IMR-90 (cell line): ENCODE measurements at regions of chr12 and their contacts with region 1.

Region 1: DNA sequence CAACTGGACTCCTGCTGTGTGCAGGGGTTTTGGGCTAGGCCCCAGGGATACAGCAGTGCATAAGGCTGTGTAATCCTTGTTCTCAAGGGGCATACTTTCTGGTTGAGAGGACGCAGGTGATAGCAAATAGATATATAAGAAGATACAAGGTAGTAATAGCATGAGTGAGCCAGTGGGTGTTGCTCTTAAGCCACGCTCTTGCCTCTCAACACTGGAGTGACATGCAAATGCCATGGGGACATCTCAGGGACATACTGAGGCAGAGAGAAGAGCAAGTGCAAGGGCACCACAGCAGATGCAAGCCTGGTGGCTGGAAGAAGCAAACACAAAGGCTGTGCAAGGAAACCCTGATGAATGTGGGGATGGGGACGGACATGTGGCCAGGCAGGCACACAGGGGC is 223.3 kb downstream of the CHST11 start:
- DNase-seq: peak; percentile 22
- ATAC-seq: peak; percentile 63; the same call in 1 of the 2 replicates
- H3K4me3 ChIP-seq: no peak overlapping the region
- H3K27ac ChIP-seq: no peak overlapping the region
- H3K4me1 ChIP-seq: no peaks in the 10 kb centered on the region
- H3K27me3 ChIP-seq: no peaks in the 10 kb centered on the region; the same call in none of the 2 replicates
- CTCF ChIP-seq: peak; percentile 39
- POLR2A ChIP-seq: no peak
- RAD21 ChIP-seq: peak; percentile 56

Region 2: GRCh38 chr12:103924761-103925641 is 755.1 kb before region 1 on chr12:
- CTCF ChIA-PET with region 1: no interaction called
- POLR2A ChIA-PET with region 1: no interaction called
- dilution Hi-C with region 1: no loop called
- in situ Hi-C with region 1: no loop called
- intact Hi-C with region 1: no loop called
- DNase-seq: peak; percentile 88
- ATAC-seq: no peak
- H3K4me3 ChIP-seq: no peak overlapping the region
- H3K27ac ChIP-seq: no peak overlapping the region; the same call in 1 of the 2 replicates
- H3K4me1 ChIP-seq: peaks cover 4% of the 10 kb centered on the region
- H3K27me3 ChIP-seq: no peaks in the 10 kb centered on the region
- CTCF ChIP-seq: no peak
- POLR2A ChIP-seq: no peak
- RAD21 ChIP-seq: no peak

Region 3: GRCh38 chr12:104858611-104859543 is 178.8 kb after region 1 on chr12:
- CTCF ChIA-PET with region 1: no interaction called
- POLR2A ChIA-PET with region 1: no interaction called
- dilution Hi-C with region 1: no loop called
- in situ Hi-C with region 1: no loop called
- intact Hi-C with region 1: loop called (anchors 10 kb)
- DNase-seq: peak; percentile 61
- ATAC-seq: peak; percentile 27
- H3K4me3 ChIP-seq: no peak overlapping the region
- H3K27ac ChIP-seq: no peak overlapping the region
- H3K4me1 ChIP-seq: peaks cover 2% of the 10 kb centered on the region; the same call in 1 of the 2 replicates
- H3K27me3 ChIP-seq: no peaks in the 10 kb centered on the region
- CTCF ChIP-seq: no peak
- POLR2A ChIP-seq: no peak
- RAD21 ChIP-seq: no peak